Transverse colon (tissue), 4 donors: ENCODE measurements at regions of chrX and their contacts with region 1.

Region 1: GRCh38 chrX:118807151-118808017 is 16.2 kb upstream of the ZCCHC12 start:
- DNase-seq: peak; percentile 47
- H3K4me3 ChIP-seq: no peak overlapping the region
- H3K27ac ChIP-seq: no peak overlapping the region
- H3K4me1 ChIP-seq: no peaks in the 10 kb centered on the region
- H3K27me3 ChIP-seq: no peaks in the 10 kb centered on the region
- CTCF ChIP-seq: peak; percentile 56 to 63 (median 59)
- EP300 ChIP-seq: no peak
- POLR2A ChIP-seq: no peak

Region 2: GRCh38 chrX:118459494-118459893 is 347.9 kb before region 1 on chrX:
- in situ Hi-C with region 1: loop called in 2 of 4 experiments (anchors 25 kb)
- intact Hi-C with region 1: no loop called
- DNase-seq: no peak
- H3K4me3 ChIP-seq: no peak overlapping the region
- H3K27ac ChIP-seq: no peak overlapping the region
- H3K4me1 ChIP-seq: no peaks in the 10 kb centered on the region
- H3K27me3 ChIP-seq: no peaks in the 10 kb centered on the region
- CTCF ChIP-seq: peak; percentile 28 to 44 (median 36)
- EP300 ChIP-seq: no peak
- POLR2A ChIP-seq: no peak

Region 3: DNA sequence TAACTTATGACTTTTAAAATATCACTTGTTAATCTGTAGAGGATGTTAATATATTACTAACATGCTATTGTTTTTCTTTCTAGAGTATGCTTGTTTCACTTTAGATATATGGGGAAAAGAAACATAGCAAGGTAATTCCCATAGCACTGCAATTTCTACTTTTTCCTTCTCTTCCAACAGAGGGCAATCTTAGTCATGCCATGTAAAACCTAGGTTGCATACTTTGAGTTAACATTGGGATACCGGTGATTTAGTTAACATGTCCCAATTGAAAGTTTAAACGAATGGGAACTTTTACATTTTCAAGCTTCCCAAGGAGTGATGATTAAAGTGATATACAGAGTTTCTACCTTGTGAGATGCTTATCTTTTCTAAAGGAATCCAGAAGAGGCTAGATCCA is 169.4 kb before region 1 on chrX:
- in situ Hi-C with region 1: loop called (anchors 10 to 25 kb)
- intact Hi-C with region 1: loop called (anchors 10 kb)
- DNase-seq: no peak
- H3K4me3 ChIP-seq: no peak overlapping the region
- H3K27ac ChIP-seq: no peak overlapping the region
- H3K4me1 ChIP-seq: no peaks in the 10 kb centered on the region
- H3K27me3 ChIP-seq: no peaks in the 10 kb centered on the region
- CTCF ChIP-seq: peak in 2 of 5 experiments; percentile 12 to 21
- EP300 ChIP-seq: no peak
- POLR2A ChIP-seq: no peak

Region 4: DNA sequence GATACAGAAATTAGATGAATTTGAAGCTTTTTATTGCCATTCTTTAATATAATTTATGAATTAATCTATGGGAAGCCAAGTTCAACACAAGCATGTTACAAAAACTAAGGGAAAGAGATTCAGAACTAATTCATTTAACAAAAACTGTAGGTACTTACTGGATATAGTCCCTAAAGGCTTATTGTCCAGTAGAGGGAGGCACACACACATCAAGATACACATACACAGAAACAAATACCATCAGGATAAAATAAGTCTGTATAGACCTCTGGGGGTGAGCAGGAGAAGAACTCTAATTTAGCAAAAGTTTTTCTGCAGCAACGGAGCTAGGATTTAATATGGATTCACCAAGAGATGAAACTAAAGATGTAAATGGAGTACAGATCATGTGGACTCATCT is 163.0 kb before region 1 on chrX:
- in situ Hi-C with region 1: loop called (anchors 10 to 25 kb)
- intact Hi-C with region 1: loop called (anchors 10 kb)
- DNase-seq: no peak
- H3K4me3 ChIP-seq: no peak overlapping the region
- H3K27ac ChIP-seq: no peak overlapping the region
- H3K4me1 ChIP-seq: no peaks in the 10 kb centered on the region
- H3K27me3 ChIP-seq: no peaks in the 10 kb centered on the region
- CTCF ChIP-seq: peak; percentile 36 to 53 (median 41)
- EP300 ChIP-seq: no peak
- POLR2A ChIP-seq: no peak

Region 5: DNA sequence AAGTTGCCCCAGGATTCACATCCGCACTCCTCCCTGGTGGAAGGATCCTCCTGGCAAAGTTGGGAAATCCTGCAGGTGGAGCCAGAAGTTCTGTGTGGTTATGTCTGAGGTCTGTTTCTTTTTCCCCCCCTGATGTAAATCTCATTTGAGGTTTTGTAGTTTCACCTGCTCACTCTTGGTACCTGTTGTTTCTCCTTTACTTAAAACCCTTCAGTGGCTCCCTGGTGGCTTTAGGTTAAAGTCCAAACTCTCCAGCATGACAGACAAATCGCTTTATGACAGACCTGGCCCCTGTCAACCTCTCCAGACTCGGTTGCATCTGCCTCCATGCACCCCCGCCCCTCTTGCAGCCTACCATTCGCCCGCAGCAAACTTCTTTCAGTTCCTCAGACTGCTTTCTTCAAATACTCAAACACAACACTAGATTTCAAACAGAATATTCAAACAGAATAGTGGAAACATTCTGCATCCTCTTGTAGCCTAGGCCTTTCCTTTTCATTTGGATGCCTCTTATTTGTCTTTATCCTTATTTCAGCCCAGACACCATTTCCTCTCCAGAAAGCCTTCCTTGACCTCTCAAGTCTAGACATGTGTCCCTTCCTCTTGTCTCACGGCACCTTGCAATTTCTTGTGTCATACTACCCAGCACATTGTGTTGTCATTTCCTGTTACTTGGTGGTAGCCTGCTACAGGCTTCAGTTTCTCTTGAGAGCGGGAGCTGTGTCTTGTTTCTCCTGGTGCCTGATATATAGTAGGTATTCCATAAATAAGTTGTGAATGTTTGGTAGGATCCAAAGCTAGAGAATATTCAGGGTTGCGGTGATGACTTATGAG is 55.2 kb before region 1 on chrX:
- in situ Hi-C with region 1: no loop called
- intact Hi-C with region 1: no loop called
- DNase-seq: no peak
- H3K4me3 ChIP-seq: no peak overlapping the region
- H3K27ac ChIP-seq: no peak overlapping the region
- H3K4me1 ChIP-seq: peaks cover 0 to 3% (median 0%) of the 10 kb centered on the region in 4 donors
- H3K27me3 ChIP-seq: no peaks in the 10 kb centered on the region
- CTCF ChIP-seq: no peak
- EP300 ChIP-seq: no peak
- POLR2A ChIP-seq: no peak

Region 6: DNA sequence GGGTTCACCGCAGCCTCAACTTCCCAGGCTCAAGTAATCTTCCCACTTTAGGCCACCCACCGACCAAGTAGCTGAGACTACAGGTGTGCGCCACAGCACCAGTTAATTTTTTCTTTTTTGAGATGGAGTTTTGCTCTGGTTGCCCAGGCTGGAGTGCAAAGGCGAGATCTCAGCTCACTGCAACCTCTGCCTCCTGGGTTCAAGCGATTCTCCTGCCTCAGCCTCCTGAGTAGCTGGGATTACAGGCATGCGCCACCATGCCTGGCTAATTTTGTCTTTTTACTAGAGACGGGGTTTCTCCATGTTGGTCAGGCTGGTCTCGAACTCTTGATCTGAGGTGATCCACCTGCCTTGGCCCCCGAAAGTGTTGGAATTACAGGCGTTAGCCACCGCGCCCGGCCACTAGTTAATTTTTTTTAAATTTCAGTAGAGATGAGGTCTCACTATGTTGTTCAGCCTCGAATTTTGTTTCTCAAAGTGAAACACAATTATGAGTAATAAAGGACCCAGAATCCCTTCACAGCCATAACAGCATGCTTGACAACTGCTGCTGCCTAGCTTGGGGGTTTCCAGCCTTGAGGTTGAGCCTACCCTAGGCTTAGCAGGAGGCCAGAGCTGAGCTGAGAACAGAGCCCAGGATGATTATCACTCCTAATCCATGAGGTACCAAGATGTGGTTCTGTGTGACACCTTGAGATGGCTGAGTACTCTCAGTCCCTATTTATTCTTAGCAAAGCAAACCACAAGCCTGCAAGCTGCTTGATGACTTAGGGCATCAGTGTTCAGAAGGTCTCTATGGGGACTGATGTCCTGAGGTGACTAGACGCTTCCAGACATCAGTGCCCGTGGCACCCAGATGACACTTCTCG is 840.4 kb after region 1 on chrX:
- in situ Hi-C with region 1: no loop called
- intact Hi-C with region 1: no loop called
- DNase-seq: no peak
- H3K4me3 ChIP-seq: no peak overlapping the region
- H3K27ac ChIP-seq: peak overlapping the region in 1 of 4 donors; percentile 30
- H3K4me1 ChIP-seq: no peaks in the 10 kb centered on the region
- H3K27me3 ChIP-seq: no peaks in the 10 kb centered on the region
- CTCF ChIP-seq: no peak
- EP300 ChIP-seq: no peak
- POLR2A ChIP-seq: no peak